Stomach (tissue), 19 donors: ENCODE measurements at regions of chr6 and their contacts with region 1.

Region 1: DNA sequence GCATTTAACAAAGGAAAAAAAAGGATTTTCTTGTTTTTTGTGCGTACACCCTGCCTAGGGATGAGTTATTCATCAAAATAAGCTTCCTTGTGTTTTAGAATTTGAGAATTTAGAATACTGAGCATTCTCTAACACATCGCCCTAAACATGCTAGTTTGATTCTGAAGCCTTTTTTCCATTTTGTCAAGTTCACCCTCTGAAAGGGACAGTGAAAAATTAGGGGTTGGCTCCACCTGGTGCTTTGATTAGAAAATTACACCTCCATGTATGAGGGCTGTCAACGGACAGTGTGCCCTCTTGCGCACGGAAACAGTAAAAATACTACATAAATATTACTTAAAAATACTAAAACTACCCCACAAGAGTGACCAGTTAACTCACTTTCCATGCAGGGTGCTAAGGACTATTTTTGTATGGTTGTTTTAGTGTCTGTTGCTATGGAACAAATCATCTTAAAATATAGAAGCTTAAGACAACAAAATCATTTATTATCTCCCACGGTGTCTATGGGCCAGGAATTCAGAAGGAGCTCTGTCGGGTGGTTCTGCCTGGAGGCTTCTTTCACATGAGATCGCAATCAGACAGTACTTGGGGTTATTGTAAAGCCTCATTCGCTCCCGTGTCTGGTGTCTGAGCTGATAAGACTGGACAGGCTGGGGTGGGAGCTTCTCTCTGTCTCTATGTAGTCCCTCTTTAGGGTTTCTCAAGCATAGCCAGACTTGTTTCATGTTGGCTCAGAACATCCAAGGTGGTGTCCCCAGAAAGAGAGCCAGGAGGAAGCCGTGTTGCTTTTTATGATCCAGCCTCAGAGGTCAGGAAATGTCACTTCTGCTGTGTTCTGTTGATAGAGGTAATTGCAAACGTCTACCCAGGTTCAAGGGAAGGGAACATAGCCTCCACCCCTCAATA is 41.1 kb upstream of the TMEM170B start:
- DNase-seq: peak; percentile 55 to 95
- H3K4me3 ChIP-seq: no peak overlapping the region
- H3K27ac ChIP-seq: peak overlapping the region in 2 of 5 donors; percentile 11 to 47
- H3K4me1 ChIP-seq: peaks cover 0 to 16% (median 2%) of the 10 kb centered on the region in 4 donors
- H3K27me3 ChIP-seq: no peaks in the 10 kb centered on the region
- CTCF ChIP-seq: peak in 5 of 7 experiments; percentile 78 to 97 (median 90)
- EP300 ChIP-seq: no peak
- POLR2A ChIP-seq: no peak

Region 2: GRCh38 chr6:10048370-10049298 is 1447.8 kb before region 1 on chr6:
- intact Hi-C with region 1: no loop called
- DNase-seq: peak; percentile 27 to 76
- H3K4me3 ChIP-seq: no peak overlapping the region
- H3K27ac ChIP-seq: peak overlapping the region in 2 of 5 donors; percentile 49 to 57
- H3K4me1 ChIP-seq: no peaks in the 10 kb centered on the region
- H3K27me3 ChIP-seq: no peaks in the 10 kb centered on the region
- CTCF ChIP-seq: no peak
- EP300 ChIP-seq: no peak
- POLR2A ChIP-seq: no peak

Region 3: DNA sequence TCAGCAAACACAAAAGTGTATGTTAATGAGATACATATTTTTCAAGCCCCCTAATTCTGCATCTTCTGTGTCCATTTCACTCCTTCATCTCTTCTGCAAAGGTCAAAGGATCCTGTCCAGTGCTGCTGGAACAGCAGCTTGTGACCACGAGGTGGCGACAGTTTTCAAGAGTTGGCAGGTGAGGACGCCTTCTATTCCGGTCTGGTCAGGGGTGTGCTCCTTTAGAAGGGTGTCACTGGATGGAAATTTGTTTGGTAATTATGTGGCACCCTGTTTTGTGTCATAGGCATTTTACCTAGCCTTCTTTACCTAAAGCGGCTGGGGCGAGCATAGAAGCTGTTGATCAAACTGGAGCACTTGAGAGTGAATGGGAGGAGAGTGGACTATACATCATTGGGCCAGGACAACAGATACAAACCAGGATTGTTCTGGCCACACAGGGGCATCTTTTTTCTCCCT is 352.0 kb before region 1 on chr6:
- intact Hi-C with region 1: loop called (anchors 5 kb)
- DNase-seq: peak; percentile 82 to 92
- H3K4me3 ChIP-seq: no peak overlapping the region
- H3K27ac ChIP-seq: no peak overlapping the region
- H3K4me1 ChIP-seq: peaks cover 0 to 3% (median 0%) of the 10 kb centered on the region in 4 donors
- H3K27me3 ChIP-seq: no peaks in the 10 kb centered on the region
- CTCF ChIP-seq: peak in 5 of 7 experiments; percentile 79 to 93 (median 90)
- EP300 ChIP-seq: no peak
- POLR2A ChIP-seq: no peak

Region 4: GRCh38 chr6:11172501-11173332 is 323.7 kb before region 1 on chr6:
- intact Hi-C with region 1: loop called (anchors 10 kb)
- DNase-seq: peak; percentile 74 to 84
- H3K4me3 ChIP-seq: no peak overlapping the region
- H3K27ac ChIP-seq: no peak overlapping the region
- H3K4me1 ChIP-seq: peaks cover 0 to 9% (median 6%) of the 10 kb centered on the region in 4 donors
- H3K27me3 ChIP-seq: no peaks in the 10 kb centered on the region
- CTCF ChIP-seq: peak in 5 of 7 experiments; percentile 68 to 86 (median 82)
- EP300 ChIP-seq: no peak
- POLR2A ChIP-seq: no peak

Region 5: GRCh38 chr6:11232193-11232769 is 264.1 kb before region 1 on chr6 and contains the start of gene NEDD9:
- intact Hi-C with region 1: loop called (anchors 10 kb)
- DNase-seq: peak; percentile 98 to 99
- H3K4me3 ChIP-seq: peak within 1 kb of the TSS; percentile 54 to 67 (median 58)
- H3K27ac ChIP-seq: peak within 1 kb of the TSS; percentile 77 to 93 (median 89)
- H3K4me1 ChIP-seq: peaks cover 0 to 52% (median 29%) of the 10 kb centered on the region in 4 donors
- H3K27me3 ChIP-seq: no peaks in the 10 kb centered on the region
- CTCF ChIP-seq: no peak
- EP300 ChIP-seq: no peak
- POLR2A ChIP-seq: peak in 2 of 4 donors; percentile 98 to 99
- total RNA-seq, gene NEDD9: 11.3 to 97.9 (median 48.2) TPM

Region 6: GRCh38 chr6:11552442-11552841 is 56.0 kb after region 1 on chr6:
- intact Hi-C with region 1: no loop called
- DNase-seq: no peak
- H3K4me3 ChIP-seq: no peak overlapping the region
- H3K27ac ChIP-seq: no peak overlapping the region
- H3K4me1 ChIP-seq: peaks cover 0 to 10% (median 3%) of the 10 kb centered on the region in 4 donors
- H3K27me3 ChIP-seq: no peaks in the 10 kb centered on the region
- CTCF ChIP-seq: no peak
- EP300 ChIP-seq: no peak
- POLR2A ChIP-seq: no peak